GM12878 (cell line): ENCODE measurements at regions of chr13 and their contacts with region 1.

Region 1: GRCh38 chr13:51895906-51896888 is 34.4 kb downstream of the CCDC70 start:
- DNase-seq: no peak
- ATAC-seq: peak; percentile 99
- H3K4me3 ChIP-seq: no peak overlapping the region
- H3K27ac ChIP-seq: no peak overlapping the region
- H3K4me1 ChIP-seq: no peaks in the 10 kb centered on the region
- H3K27me3 ChIP-seq: peaks cover 1 to 4% of the 10 kb centered on the region in 2 experiments; a peak in 2 of 4 replicates
- CTCF ChIP-seq: peak; percentile 78 to 84 (median 83)
- EP300 ChIP-seq: no peak
- POLR2A ChIP-seq: no peak
- RAD21 ChIP-seq: peak; percentile 81

Region 2: DNA sequence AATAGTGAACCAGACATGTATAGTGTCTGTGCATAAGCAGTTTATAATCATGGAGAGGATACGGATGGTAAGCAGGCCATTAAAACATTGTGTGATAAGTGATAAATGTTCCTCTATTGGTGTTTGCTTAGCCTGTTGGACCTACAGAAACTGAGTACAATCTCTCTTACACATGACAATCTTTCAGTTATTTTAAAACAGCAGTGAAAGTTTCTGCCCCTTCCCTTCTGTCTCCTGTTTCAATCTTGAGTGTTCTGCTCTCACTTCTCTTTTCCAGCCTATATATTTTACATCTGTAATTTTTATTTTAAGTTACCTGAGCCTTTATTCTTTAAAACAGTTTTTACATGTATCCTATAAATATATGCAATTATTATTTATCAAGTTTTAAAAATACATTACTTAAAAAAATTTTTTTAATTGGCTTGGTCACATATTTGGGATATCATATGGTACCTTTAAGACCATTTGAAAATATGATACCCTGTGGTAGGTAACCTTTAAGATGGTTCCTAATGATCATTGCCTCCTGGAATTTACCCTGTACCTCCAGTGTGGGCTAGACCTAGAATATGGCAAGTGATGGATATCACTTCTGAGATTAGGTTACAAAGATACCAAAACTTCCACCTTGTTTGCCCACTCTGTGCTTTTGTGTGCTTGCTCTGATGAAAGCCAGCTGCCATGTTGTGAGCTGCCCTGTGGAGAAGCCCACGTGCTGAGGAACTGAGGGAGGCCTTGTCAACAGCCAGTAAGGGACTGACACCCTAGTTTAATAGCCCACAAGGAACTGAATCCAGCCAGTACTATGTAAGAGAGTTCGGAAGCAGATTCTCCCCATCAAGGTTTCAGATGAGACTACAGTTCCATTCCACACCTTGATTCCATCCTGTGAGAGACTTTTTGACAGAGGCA is 191.5 kb before region 1 on chr13:
- CTCF ChIA-PET with region 1: no interaction called
- POLR2A ChIA-PET with region 1: no interaction called
- RAD21 ChIA-PET with region 1: no interaction called
- SMC1A ChIA-PET with region 1: no interaction called
- in situ Hi-C with region 1: no loop called
- intact Hi-C with region 1: no loop called
- DNase-seq: peak; percentile 52
- ATAC-seq: peak; percentile 93
- H3K4me3 ChIP-seq: no peak overlapping the region
- H3K27ac ChIP-seq: peak overlapping the region; percentile 78
- H3K4me1 ChIP-seq: peaks cover 34% of the 10 kb centered on the region
- H3K27me3 ChIP-seq: no peaks in the 10 kb centered on the region
- CTCF ChIP-seq: no peak
- EP300 ChIP-seq: peak in 1 of 2 experiments; percentile 49; a peak in 1 of 4 replicates
- POLR2A ChIP-seq: no peak
- RAD21 ChIP-seq: no peak

Region 3: GRCh38 chr13:51911860-51912510 is 15.8 kb after region 1 on chr13:
- CTCF ChIA-PET with region 1: interaction called, 13 read pairs
- POLR2A ChIA-PET with region 1: no interaction called
- RAD21 ChIA-PET with region 1: interaction called, 5 read pairs
- SMC1A ChIA-PET with region 1: interaction called, 4 read pairs
- in situ Hi-C with region 1: no loop called
- intact Hi-C with region 1: no loop called
- DNase-seq: no peak
- ATAC-seq: peak; percentile 26
- H3K4me3 ChIP-seq: no peak overlapping the region
- H3K27ac ChIP-seq: no peak overlapping the region
- H3K4me1 ChIP-seq: peaks cover 6% of the 10 kb centered on the region; the same call in 1 of the 2 replicates
- H3K27me3 ChIP-seq: peaks cover 0 to 4% of the 10 kb centered on the region in 2 experiments; a peak in 2 of 4 replicates
- CTCF ChIP-seq: no peak; a peak in 1 of 6 replicates
- EP300 ChIP-seq: no peak
- POLR2A ChIP-seq: no peak
- RAD21 ChIP-seq: no peak

Region 4: GRCh38 chr13:51959773-51960172 is 63.6 kb after region 1 on chr13:
- CTCF ChIA-PET with region 1: interaction called, 18 read pairs
- POLR2A ChIA-PET with region 1: no interaction called
- RAD21 ChIA-PET with region 1: interaction called, 8 read pairs
- SMC1A ChIA-PET with region 1: interaction called, 6 read pairs
- in situ Hi-C with region 1: no loop called
- intact Hi-C with region 1: loop called (anchors 5 kb)
- DNase-seq: no peak
- ATAC-seq: peak; percentile 65
- H3K4me3 ChIP-seq: no peak overlapping the region
- H3K27ac ChIP-seq: no peak overlapping the region
- H3K4me1 ChIP-seq: peaks cover 17% of the 10 kb centered on the region
- H3K27me3 ChIP-seq: no peaks in the 10 kb centered on the region; a peak in 1 of 4 replicates
- CTCF ChIP-seq: peak; percentile 18 to 25 (median 22); a peak in 3 of 6 replicates
- EP300 ChIP-seq: no peak
- POLR2A ChIP-seq: no peak
- RAD21 ChIP-seq: 0 out of 2 replicates have a peak, but pooled peaks have one; percentile 24

Region 5: DNA sequence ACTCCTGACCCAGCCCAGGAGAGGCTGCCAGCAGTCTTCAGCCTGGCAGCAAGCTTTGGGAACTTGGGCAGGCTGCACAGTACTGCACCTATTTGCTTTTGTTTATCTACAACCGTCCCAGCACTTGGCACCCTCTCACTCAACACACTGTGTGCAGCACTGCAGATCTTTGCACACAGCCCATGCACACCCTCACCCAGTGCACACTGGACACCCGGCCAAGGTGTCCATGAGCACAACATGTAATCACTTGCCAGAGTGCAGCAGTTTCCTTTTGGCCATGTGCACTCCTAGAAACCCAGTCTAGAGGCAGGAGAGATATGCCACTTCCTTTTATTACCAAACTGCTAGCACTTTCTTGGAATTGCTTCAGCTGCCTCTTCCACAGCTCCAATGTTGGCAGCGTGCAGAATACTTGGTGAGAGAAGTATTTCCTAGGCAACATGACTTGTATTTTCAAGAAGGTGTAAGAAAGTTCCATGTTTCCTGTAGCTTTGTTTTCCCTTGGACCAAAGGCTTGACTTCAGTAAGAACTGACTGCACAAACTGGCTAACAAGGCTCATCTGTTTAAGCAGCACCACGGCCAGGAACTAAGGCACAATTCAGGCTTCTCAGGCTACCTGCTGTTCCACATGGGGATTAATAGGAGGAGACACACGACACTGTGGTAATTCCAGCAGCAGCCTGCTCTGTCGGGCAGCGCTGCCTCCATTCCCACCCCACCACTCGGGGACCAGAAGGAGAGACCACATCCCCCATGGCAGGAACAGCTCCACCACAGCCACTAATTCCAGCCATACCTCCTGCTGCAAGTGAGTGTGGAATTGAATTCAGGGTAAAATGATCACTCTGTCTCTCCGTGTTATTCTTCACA is 99.7 kb after region 1 on chr13:
- CTCF ChIA-PET with region 1: interaction called, 15 read pairs
- POLR2A ChIA-PET with region 1: interaction called, 3 read pairs
- RAD21 ChIA-PET with region 1: interaction called, 3 read pairs
- SMC1A ChIA-PET with region 1: interaction called, 6 read pairs
- in situ Hi-C with region 1: no loop called
- intact Hi-C with region 1: loop called (anchors 5 kb)
- DNase-seq: no peak
- ATAC-seq: peak; percentile 21; the same call in 1 of the 3 replicates
- H3K4me3 ChIP-seq: no peak overlapping the region
- H3K27ac ChIP-seq: no peak overlapping the region
- H3K4me1 ChIP-seq: no peaks in the 10 kb centered on the region
- H3K27me3 ChIP-seq: peaks cover 3 to 11% of the 10 kb centered on the region in 2 experiments; a peak in 3 of 4 replicates
- CTCF ChIP-seq: no peak
- EP300 ChIP-seq: no peak
- POLR2A ChIP-seq: no peak
- RAD21 ChIP-seq: no peak

Region 6: GRCh38 chr13:52001120-52001731 is 105.0 kb after region 1 on chr13:
- CTCF ChIA-PET with region 1: interaction called, 15 read pairs
- POLR2A ChIA-PET with region 1: no interaction called
- RAD21 ChIA-PET with region 1: interaction called, 3 read pairs
- SMC1A ChIA-PET with region 1: interaction called, 6 read pairs
- in situ Hi-C with region 1: no loop called
- intact Hi-C with region 1: loop called (anchors 5 kb)
- DNase-seq: no peak
- ATAC-seq: peak; percentile 92
- H3K4me3 ChIP-seq: no peak overlapping the region
- H3K27ac ChIP-seq: no peak overlapping the region
- H3K4me1 ChIP-seq: no peaks in the 10 kb centered on the region
- H3K27me3 ChIP-seq: peaks cover 2 to 7% of the 10 kb centered on the region in 2 experiments; a peak in 3 of 4 replicates
- CTCF ChIP-seq: peak; percentile 68 to 72 (median 70)
- EP300 ChIP-seq: no peak
- POLR2A ChIP-seq: no peak
- RAD21 ChIP-seq: peak; percentile 73

Region 7: GRCh38 chr13:52450012-52450792 is 554.0 kb after region 1 on chr13 and contains the start of gene VPS36:
- CTCF ChIA-PET with region 1: interaction called, 3 read pairs
- POLR2A ChIA-PET with region 1: no interaction called
- RAD21 ChIA-PET with region 1: no interaction called
- SMC1A ChIA-PET with region 1: interaction called, 4 read pairs
- in situ Hi-C with region 1: no loop called
- intact Hi-C with region 1: loop called (anchors 10 kb)
- DNase-seq: peak; percentile 72
- ATAC-seq: peak; percentile 81
- H3K4me3 ChIP-seq: peak within 1 kb of the TSS; percentile 69
- H3K27ac ChIP-seq: peak within 1 kb of the TSS; percentile 90
- H3K4me1 ChIP-seq: peaks cover 14% of the 10 kb centered on the region
- H3K27me3 ChIP-seq: no peaks in the 10 kb centered on the region
- CTCF ChIP-seq: peak; percentile 92 to 100 (median 99)
- EP300 ChIP-seq: no peak
- POLR2A ChIP-seq: peak; percentile 94
- RAD21 ChIP-seq: peak; percentile 70
- polyA plus RNA-seq, gene VPS36: 10.3 to 12.3 TPM